ENCODE measurements at regions of chr6 and their contacts with region 1.

Region 1: GRCh38 chr6:150395398-150396009 is 26.7 kb downstream of the IYD start:
- DNase-seq: peak in 7 of 10 donors; percentile 32 to 69 (median 46)
- H3K4me3 ChIP-seq: no peak overlapping the region
- H3K27ac ChIP-seq: no peak overlapping the region
- H3K27me3 ChIP-seq: peaks cover 0 to under 1% (median 0%) of the 10 kb centered on the region in 45 donors
- CTCF ChIP-seq: peak; percentile 59 to 89 (median 78)

Region 2: GRCh38 chr6:149934249-149935156 is 461.0 kb before region 1 on chr6:
- intact Hi-C with region 1: loop called in 1 of 2 experiments (anchors 10 kb)
- DNase-seq: peak in 3 of 10 donors; percentile 49 to 80 (median 58)
- H3K4me3 ChIP-seq: no peak overlapping the region
- H3K27ac ChIP-seq: no peak overlapping the region
- H3K27me3 ChIP-seq: peaks cover 0 to 98% (median 65%) of the 10 kb centered on the region in 45 donors
- CTCF ChIP-seq: peak; percentile 80 to 97 (median 88)

Region 3: DNA sequence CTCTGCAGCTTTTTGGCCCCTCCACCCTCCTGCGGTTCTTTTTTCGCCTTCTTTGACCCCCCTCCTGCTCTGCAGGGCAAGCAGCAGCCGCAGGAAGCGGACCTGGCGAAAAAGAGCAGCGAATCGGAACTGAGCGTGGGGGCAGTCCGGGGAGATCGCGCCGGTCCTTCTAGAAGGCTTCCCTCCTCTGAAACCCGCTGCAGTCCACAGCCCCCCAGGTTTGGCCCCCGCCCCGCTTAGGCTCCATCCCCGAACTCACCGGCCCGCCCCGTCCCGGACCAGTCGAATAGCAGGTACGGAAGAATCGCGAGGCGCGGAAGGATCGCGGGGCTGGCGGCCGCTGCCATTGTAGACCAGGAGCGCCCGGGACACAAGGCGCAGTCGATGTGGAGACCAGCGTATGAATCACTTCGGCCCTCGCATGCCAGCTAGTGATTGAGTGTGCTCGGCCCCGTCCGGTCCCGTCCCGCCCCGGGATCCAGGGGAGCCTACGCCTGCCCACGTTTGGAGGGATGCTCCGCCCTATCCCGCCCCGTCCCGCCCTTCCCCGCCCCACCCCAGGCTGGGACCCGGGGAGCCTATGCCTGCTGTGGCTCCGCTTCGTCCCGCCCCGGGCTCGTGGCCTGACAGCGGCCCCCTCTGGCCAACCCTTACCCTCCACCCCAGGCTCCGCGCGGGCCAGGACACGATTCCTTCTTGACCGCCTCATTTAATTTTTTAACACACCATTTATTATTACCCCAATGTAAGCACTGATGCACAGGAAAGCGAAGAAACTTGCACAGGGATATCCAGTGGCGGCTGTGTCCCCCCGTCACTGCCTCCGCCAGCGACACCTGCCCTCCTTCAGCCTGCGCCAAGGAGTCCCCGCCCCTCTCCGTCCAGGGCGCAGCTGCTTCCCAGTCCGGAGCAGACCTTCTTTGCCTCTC is 326.5 kb before region 1 on chr6 and contains the start of gene ULBP3:
- intact Hi-C with region 1: loop called in 1 of 2 experiments (anchors 5 kb)
- DNase-seq: peak; percentile 9 to 84 (median 56)
- H3K4me3 ChIP-seq: peak within 1 kb of the TSS; percentile 51 to 80 (median 70)
- H3K27ac ChIP-seq: peak within 1 kb of the TSS in 33 of 59 donors; percentile 1 to 64 (median 38)
- H3K27me3 ChIP-seq: peaks cover 0 to 6% (median 0%) of the 10 kb centered on the region in 45 donors
- CTCF ChIP-seq: peak in 45 of 56 donors; percentile 17 to 63 (median 41)
- total RNA-seq, gene ULBP3: 0.53 to 5.3 (median 2.0) TPM in 115 of 120 experiments, not detected in the others

Region 4: GRCh38 chr6:150079604-150080003 is 315.9 kb before region 1 on chr6:
- intact Hi-C with region 1: loop called in 1 of 2 experiments (anchors 5 kb)
- DNase-seq: peak in 1 of 10 donors; percentile 38
- H3K4me3 ChIP-seq: peak overlapping the region in 34 of 59 donors; percentile 4 to 48 (median 28)
- H3K27ac ChIP-seq: peak overlapping the region in 9 of 59 donors; percentile 13 to 70 (median 42)
- H3K27me3 ChIP-seq: peaks cover 0 to 8% (median 0%) of the 10 kb centered on the region in 45 donors
- CTCF ChIP-seq: no peak

Region 5: DNA sequence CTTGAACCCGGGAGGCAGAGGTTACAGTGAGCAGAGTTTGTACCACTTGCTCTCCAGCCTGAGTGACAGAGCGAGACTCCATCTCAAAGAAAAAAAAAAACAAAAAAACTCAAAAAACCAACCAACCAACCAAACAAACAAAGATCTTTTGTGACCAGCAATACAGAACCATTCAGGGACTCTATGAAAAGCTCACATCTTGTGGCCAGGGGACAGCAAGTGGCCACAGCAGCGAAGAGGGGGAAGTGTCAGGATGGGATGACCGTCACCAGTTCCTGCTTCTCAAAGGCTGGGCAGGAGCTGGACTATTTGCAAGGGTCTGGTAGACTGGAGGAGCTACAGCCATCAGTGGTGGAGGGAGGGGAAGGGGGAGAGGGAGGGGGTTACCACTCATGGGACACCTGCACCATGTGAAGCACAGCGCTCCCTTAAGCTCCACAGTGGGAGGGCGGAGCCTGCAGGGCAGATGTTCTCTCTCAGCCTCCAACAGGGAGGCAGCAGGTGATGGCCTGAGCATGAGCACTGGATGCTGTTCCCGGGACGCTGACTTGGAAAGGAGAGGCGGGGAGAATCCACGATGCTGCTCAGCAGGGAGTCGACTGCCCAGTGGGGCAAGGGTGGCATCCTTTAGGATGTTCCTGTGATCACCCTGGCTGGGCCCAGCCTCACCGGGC is 306.9 kb before region 1 on chr6:
- intact Hi-C with region 1: loop called (anchors 5 kb)
- DNase-seq: no peak
- H3K4me3 ChIP-seq: peak overlapping the region in 1 of 59 donors; percentile 36
- H3K27ac ChIP-seq: no peak overlapping the region
- H3K27me3 ChIP-seq: peaks cover 0 to 13% (median 0%) of the 10 kb centered on the region in 45 donors
- CTCF ChIP-seq: no peak

Measured in dorsolateral prefrontal cortex (tissue), 120 donors.